IMR-90 (cell line): ENCODE measurements at regions of chr5 and their contacts with region 1.

Region 1: GRCh38 chr5:115816226-115817081 is at the start of gene CDO1:
- DNase-seq: peak; percentile 59
- ATAC-seq: peak; percentile 86
- H3K4me3 ChIP-seq: peak within 1 kb of the TSS; percentile 73
- H3K27ac ChIP-seq: peak within 1 kb of the TSS; percentile 62; the same call in 1 of the 2 replicates
- H3K4me1 ChIP-seq: no peaks in the 10 kb centered on the region; the same call in 1 of the 2 replicates
- H3K27me3 ChIP-seq: peaks cover 25% of the 10 kb centered on the region
- CTCF ChIP-seq: no peak
- POLR2A ChIP-seq: peak; percentile 44; the same call in 1 of the 2 replicates
- RAD21 ChIP-seq: no peak
- total RNA-seq, gene CDO1: 3.3 and 8.6 TPM in 2 replicates

Region 2: GRCh38 chr5:115641948-115642347 is 174.5 kb before region 1 on chr5:
- CTCF ChIA-PET with region 1: no interaction called
- POLR2A ChIA-PET with region 1: no interaction called
- dilution Hi-C with region 1: no loop called
- in situ Hi-C with region 1: loop called (anchors 10 kb)
- intact Hi-C with region 1: no loop called
- DNase-seq: peak; percentile 11
- ATAC-seq: no peak
- H3K4me3 ChIP-seq: no peak overlapping the region
- H3K27ac ChIP-seq: no peak overlapping the region
- H3K4me1 ChIP-seq: no peaks in the 10 kb centered on the region
- H3K27me3 ChIP-seq: peaks cover 24% of the 10 kb centered on the region
- CTCF ChIP-seq: no peak
- POLR2A ChIP-seq: no peak
- RAD21 ChIP-seq: no peak

Region 3: GRCh38 chr5:115738807-115739206 is 77.6 kb before region 1 on chr5:
- CTCF ChIA-PET with region 1: no interaction called
- POLR2A ChIA-PET with region 1: no interaction called
- dilution Hi-C with region 1: no loop called
- in situ Hi-C with region 1: no loop called
- intact Hi-C with region 1: loop called (anchors 1 kb)
- DNase-seq: no peak
- ATAC-seq: no peak
- H3K4me3 ChIP-seq: no peak overlapping the region
- H3K27ac ChIP-seq: no peak overlapping the region
- H3K4me1 ChIP-seq: no peaks in the 10 kb centered on the region
- H3K27me3 ChIP-seq: peaks cover 3% of the 10 kb centered on the region
- CTCF ChIP-seq: no peak
- POLR2A ChIP-seq: no peak
- RAD21 ChIP-seq: no peak